Heart right ventricle (tissue), 16 donors: ENCODE measurements at regions of chr2 and their contacts with region 1.

Region 1: DNA sequence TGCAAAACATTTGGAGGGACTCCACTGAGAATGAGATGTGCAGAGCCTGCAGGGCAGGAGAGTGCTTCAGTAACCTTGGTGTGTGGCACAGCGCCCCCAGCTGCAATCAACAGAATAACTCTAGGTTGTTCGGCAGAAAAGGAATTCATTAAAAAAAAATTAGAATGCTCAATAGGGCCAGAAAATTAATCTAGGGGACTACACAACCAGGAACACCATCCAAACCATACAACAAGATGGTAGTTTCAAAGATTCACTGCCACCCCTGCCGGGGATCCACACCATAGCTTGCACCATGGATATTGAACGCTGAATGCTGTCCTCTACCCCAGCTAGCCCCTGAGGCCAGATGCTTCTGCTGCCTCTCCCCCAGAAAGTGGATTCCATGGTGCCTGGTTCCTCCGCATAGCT is 50.1 kb downstream of the THUMPD2 start:
- DNase-seq: peak in 1 of 2 donors; percentile 23
- ATAC-seq: peak in 5 of 8 donors; percentile 43 to 56 (median 46)
- H3K4me3 ChIP-seq: no peak overlapping the region
- H3K27ac ChIP-seq: no peak overlapping the region
- H3K4me1 ChIP-seq: peaks cover 0 to 19% (median 0%) of the 10 kb centered on the region in 9 donors
- H3K27me3 ChIP-seq: no peaks in the 10 kb centered on the region
- CTCF ChIP-seq: peak in 8 of 9 donors; percentile 29 to 72 (median 66)

Region 2: DNA sequence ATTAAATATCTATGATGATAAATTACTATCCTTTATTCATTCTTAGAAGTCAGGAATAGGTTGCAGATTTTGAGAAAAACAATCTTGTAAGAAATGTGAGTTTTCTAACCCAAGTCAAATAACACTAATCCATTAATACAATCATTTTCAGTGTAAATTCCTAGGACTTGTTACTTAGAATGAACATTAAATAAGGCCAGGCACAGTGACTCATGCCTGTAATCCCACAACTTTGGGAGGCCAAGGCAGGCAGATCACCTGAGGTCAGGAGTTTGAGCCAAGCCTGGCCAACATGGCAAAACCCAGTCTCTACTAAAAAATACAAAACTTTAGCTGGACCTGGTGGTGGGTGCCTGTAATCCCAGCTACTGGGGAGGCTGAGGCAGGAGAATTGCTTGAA is 439.3 kb before region 1 on chr2:
- intact Hi-C with region 1: loop called in 1 of 10 experiments (anchors 10 kb)
- DNase-seq: no peak
- ATAC-seq: no peak
- H3K4me3 ChIP-seq: no peak overlapping the region
- H3K27ac ChIP-seq: no peak overlapping the region
- H3K4me1 ChIP-seq: no peaks in the 10 kb centered on the region
- H3K27me3 ChIP-seq: no peaks in the 10 kb centered on the region
- CTCF ChIP-seq: no peak

Region 3: GRCh38 chr2:39593439-39594393 is 135.2 kb before region 1 on chr2:
- intact Hi-C with region 1: loop called in 1 of 10 experiments (anchors 5 kb)
- DNase-seq: peak in 1 of 2 donors; percentile 70
- ATAC-seq: peak; percentile 71 to 92 (median 88)
- H3K4me3 ChIP-seq: no peak overlapping the region
- H3K27ac ChIP-seq: peak overlapping the region in 1 of 10 donors; percentile 11
- H3K4me1 ChIP-seq: peaks cover 0 to 11% (median 6%) of the 10 kb centered on the region in 9 donors
- H3K27me3 ChIP-seq: no peaks in the 10 kb centered on the region
- CTCF ChIP-seq: peak; percentile 44 to 74 (median 64)